ENCODE measurements at regions of chr11 and their contacts with region 1.

Region 1: GRCh38 chr11:44437122-44437521 is 127.2 kb upstream of the ALX4 start:
- DNase-seq: no peak

Region 2: GRCh38 chr11:43687120-43687791 is 749.9 kb before region 1 on chr11:
- intact Hi-C with region 1: no loop called
- DNase-seq: peak; percentile 81

Region 3: DNA sequence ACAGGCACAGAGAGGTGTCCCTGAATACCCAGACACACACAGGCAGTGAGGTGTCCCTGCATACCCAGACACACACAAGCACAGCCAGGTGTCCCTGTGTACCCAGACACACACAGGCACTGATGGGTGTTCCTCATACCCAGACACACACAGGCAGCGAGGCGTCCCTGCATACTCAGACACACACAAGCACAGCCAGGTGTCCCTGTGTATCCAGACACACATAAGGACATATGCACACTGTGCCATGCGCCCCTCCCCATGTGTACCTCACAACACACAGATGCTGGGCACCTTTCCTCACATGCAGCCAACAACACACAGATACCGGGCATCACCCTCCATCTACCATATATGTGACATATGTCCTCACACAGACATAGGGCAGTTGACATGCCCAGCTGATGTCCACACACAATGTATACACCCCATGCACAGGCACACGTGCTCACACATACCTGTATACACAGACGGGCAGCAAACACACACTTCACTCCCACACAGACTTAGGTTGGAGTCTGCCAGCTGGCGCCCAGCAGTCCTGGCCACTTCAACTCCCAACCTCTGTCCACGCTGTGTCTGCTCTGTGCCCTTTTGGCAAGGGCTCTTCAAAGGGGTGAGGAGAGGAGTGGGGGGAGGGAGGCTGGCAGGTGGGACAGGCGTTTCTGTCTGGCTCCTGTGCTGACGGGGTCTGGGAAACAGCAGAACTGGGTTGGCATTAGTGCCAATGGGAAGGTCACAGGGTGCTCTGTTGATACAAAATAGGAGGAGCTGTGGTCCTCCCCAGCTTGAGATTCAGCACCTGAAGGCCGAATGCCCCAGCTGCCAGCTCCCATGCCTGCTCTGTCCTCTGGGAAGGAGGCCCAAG is 57.7 kb before region 1 on chr11:
- intact Hi-C with region 1: no loop called
- DNase-seq: peak; percentile 73

Region 4: GRCh38 chr11:44519989-44520737 is 83.0 kb after region 1 on chr11:
- intact Hi-C with region 1: loop called (anchors 5 kb)
- DNase-seq: no peak

Region 5: DNA sequence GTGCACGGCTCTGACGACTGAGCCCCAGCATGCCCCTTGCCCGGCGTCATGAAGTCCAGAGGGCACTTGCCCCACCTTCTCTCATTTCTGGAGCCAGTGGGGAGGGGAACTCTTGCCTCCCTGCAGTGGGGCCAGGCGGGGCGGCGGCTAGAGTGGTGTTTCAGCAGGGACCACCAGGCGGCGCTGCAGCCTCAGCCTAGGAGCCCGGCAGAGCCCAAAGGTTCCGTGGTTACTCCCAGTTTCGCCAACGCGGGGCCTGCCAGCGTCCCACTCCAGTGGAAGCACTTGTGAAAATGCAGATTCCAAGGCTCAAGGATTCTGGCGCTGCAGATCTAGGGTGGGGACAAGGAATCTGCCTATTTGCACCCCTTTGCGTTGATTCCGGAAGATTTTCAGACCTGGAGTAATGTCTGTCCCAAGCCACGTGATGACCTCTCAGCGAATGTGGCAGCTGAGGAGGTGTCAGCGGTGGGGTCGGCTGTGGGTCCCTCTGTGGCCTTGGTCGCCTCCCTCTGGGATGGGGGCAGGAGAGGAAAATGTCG is 184.1 kb after region 1 on chr11:
- intact Hi-C with region 1: no loop called
- DNase-seq: peak; percentile 91

Measured in cardiac septum (tissue), 1 donor.